CD4-positive, alpha-beta T cell (primary cell): ENCODE measurements at regions of chr9 and their contacts with region 1.

Region 1: DNA sequence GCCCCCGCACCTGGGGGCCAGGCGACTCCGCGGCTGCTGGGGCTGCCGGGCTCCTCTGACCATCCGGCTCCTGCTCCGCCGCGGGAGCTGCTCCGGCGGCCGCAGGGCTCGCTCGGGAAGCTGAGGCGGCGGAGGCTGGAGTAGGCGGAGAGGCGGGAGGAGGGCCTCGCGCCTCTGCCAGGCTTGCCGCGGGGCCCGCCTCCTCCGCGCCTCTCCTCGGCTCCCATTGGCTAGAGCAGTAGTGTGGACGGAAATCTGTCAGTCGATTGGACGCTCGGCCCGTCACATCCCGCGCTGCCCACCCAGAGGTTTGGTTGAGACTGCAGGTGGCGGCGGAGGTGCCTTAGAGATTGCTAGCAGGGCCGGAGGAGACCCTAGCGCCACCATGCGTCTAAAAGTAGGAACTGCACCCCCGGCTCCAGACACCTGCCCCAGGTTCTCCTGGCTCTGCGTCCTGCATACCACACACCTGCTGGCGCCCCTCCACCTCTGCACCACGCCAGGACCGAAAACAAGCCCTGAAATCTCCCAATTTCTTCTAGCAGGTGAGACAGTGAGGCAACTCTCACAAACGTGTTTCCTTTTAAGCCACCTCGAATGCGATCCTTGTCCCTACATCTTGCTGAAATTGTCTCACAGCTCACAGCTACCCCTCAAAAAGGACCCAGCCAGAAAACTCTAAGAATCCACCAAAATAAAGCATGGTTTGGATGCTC is at the start of gene SCAI:
- DNase-seq: peak; percentile 96 to 99 (median 98)
- ATAC-seq: peak; percentile 98
- H3K4me3 ChIP-seq: peak within 1 kb of the TSS; percentile 54
- H3K4me3 Mint-ChIP-seq: peak within 1 kb of the TSS; percentile 94
- H3K27ac ChIP-seq: no peak within 1 kb of the TSS
- H3K27ac Mint-ChIP-seq: peak within 1 kb of the TSS; percentile 75
- H3K4me1 ChIP-seq: peaks cover 21% of the 10 kb centered on the region
- H3K4me1 Mint-ChIP-seq: peaks cover 38% of the 10 kb centered on the region
- H3K27me3 ChIP-seq: no peaks in the 10 kb centered on the region
- H3K27me3 Mint-ChIP-seq: no peaks in the 10 kb centered on the region
- CTCF ChIP-seq: peak; percentile 97
- total RNA-seq, gene SCAI: 11.6 to 13.4 TPM

Region 2: GRCh38 chr9:124602204-124602603 is 541.3 kb before region 1 on chr9:
- CTCF ChIA-PET with region 1: no interaction called
- POLR2A ChIA-PET with region 1: no interaction called
- intact Hi-C with region 1: no loop called
- DNase-seq: no peak
- ATAC-seq: no peak
- H3K4me3 ChIP-seq: no peak overlapping the region
- H3K4me3 Mint-ChIP-seq: no peak overlapping the region
- H3K27ac ChIP-seq: no peak overlapping the region
- H3K27ac Mint-ChIP-seq: no peak overlapping the region
- H3K4me1 ChIP-seq: no peaks in the 10 kb centered on the region
- H3K4me1 Mint-ChIP-seq: no peaks in the 10 kb centered on the region
- H3K27me3 ChIP-seq: peaks cover 0 to 2% of the 10 kb centered on the region in 2 experiments
- H3K27me3 Mint-ChIP-seq: peaks cover 7% of the 10 kb centered on the region
- CTCF ChIP-seq: no peak

Region 3: DNA sequence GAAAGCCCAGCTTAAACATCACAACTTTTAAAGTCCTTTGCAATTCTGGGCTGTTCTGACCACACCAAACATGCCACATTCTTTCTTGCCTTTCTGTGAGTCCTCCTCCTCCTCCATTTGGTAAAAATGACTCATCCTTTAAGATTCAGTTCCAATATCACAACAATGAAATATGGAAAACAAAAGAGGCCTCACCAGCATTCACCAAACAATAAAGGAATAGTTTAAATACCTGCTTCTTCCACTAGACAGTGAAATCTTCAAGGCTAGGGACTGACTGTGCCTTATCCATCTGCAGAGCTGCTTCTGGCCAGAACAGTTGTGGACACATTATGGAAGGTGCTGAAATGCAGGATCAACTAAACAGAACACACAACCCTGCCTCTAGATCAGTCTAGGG is 408.4 kb before region 1 on chr9:
- CTCF ChIA-PET with region 1: no interaction called
- POLR2A ChIA-PET with region 1: no interaction called
- intact Hi-C with region 1: no loop called
- DNase-seq: no peak
- ATAC-seq: no peak
- H3K4me3 ChIP-seq: no peak overlapping the region
- H3K4me3 Mint-ChIP-seq: no peak overlapping the region
- H3K27ac ChIP-seq: no peak overlapping the region
- H3K27ac Mint-ChIP-seq: no peak overlapping the region
- H3K4me1 ChIP-seq: no peaks in the 10 kb centered on the region
- H3K4me1 Mint-ChIP-seq: no peaks in the 10 kb centered on the region
- H3K27me3 ChIP-seq: peaks cover 0 to 2% of the 10 kb centered on the region in 2 experiments
- H3K27me3 Mint-ChIP-seq: peaks cover 9% of the 10 kb centered on the region
- CTCF ChIP-seq: no peak

Region 4: GRCh38 chr9:124861342-124862229 is 281.9 kb before region 1 on chr9 and contains the starts of genes ARPC5L and RPL35:
- CTCF ChIA-PET with region 1: no interaction called
- POLR2A ChIA-PET with region 1: interaction called, 6 read pairs
- intact Hi-C with region 1: loop called in 1 of 2 experiments (anchors 5 kb)
- DNase-seq: peak; percentile 91 to 98 (median 95)
- ATAC-seq: peak; percentile 92
- H3K4me3 ChIP-seq: peak within 1 kb of the TSS; percentile 89
- H3K4me3 Mint-ChIP-seq: peak within 1 kb of the TSS; percentile 96
- H3K27ac ChIP-seq: peak within 1 kb of the TSS; percentile 89 to 92
- H3K27ac Mint-ChIP-seq: peak within 1 kb of the TSS; percentile 92
- H3K4me1 ChIP-seq: peaks cover 46% of the 10 kb centered on the region
- H3K4me1 Mint-ChIP-seq: peaks cover 38% of the 10 kb centered on the region
- H3K27me3 ChIP-seq: no peaks in the 10 kb centered on the region
- H3K27me3 Mint-ChIP-seq: no peaks in the 10 kb centered on the region
- CTCF ChIP-seq: peak; percentile 23
- total RNA-seq, gene ARPC5L: 36.8 to 37.0 TPM
- total RNA-seq, gene RPL35: 2,088 to 2,142 TPM

Region 5: GRCh38 chr9:124960409-124960752 is 183.2 kb before region 1 on chr9:
- CTCF ChIA-PET with region 1: no interaction called
- POLR2A ChIA-PET with region 1: interaction called, 5 read pairs
- intact Hi-C with region 1: loop called in 1 of 2 experiments (anchors 1 kb)
- DNase-seq: no peak
- ATAC-seq: no peak
- H3K4me3 ChIP-seq: no peak overlapping the region
- H3K4me3 Mint-ChIP-seq: no peak overlapping the region
- H3K27ac ChIP-seq: no peak overlapping the region
- H3K27ac Mint-ChIP-seq: no peak overlapping the region
- H3K4me1 ChIP-seq: peaks cover 19% of the 10 kb centered on the region
- H3K4me1 Mint-ChIP-seq: peaks cover 19% of the 10 kb centered on the region
- H3K27me3 ChIP-seq: no peaks in the 10 kb centered on the region
- H3K27me3 Mint-ChIP-seq: no peaks in the 10 kb centered on the region
- CTCF ChIP-seq: no peak

Region 6: GRCh38 chr9:125119643-125120286 is 23.8 kb before region 1 on chr9:
- CTCF ChIA-PET with region 1: no interaction called
- POLR2A ChIA-PET with region 1: no interaction called
- intact Hi-C with region 1: loop called (anchors 1 kb)
- DNase-seq: peak in 5 of 14 experiments; percentile 10 to 62 (median 30)
- ATAC-seq: peak; percentile 95
- H3K4me3 ChIP-seq: no peak overlapping the region
- H3K4me3 Mint-ChIP-seq: peak overlapping the region; percentile 66
- H3K27ac ChIP-seq: no peak overlapping the region
- H3K27ac Mint-ChIP-seq: peak overlapping the region; percentile 52
- H3K4me1 ChIP-seq: peaks cover 14% of the 10 kb centered on the region
- H3K4me1 Mint-ChIP-seq: peaks cover 41% of the 10 kb centered on the region
- H3K27me3 ChIP-seq: no peaks in the 10 kb centered on the region
- H3K27me3 Mint-ChIP-seq: no peaks in the 10 kb centered on the region
- CTCF ChIP-seq: peak; percentile 36

Region 7: GRCh38 chr9:125153712-125154367 is 10.3 kb after region 1 on chr9:
- CTCF ChIA-PET with region 1: interaction called, 11 read pairs
- POLR2A ChIA-PET with region 1: interaction called, 4 read pairs
- intact Hi-C with region 1: no loop called
- DNase-seq: no peak
- ATAC-seq: no peak
- H3K4me3 ChIP-seq: no peak overlapping the region
- H3K4me3 Mint-ChIP-seq: no peak overlapping the region
- H3K27ac ChIP-seq: no peak overlapping the region
- H3K27ac Mint-ChIP-seq: no peak overlapping the region
- H3K4me1 ChIP-seq: no peaks in the 10 kb centered on the region
- H3K4me1 Mint-ChIP-seq: peaks cover 10% of the 10 kb centered on the region
- H3K27me3 ChIP-seq: no peaks in the 10 kb centered on the region
- H3K27me3 Mint-ChIP-seq: no peaks in the 10 kb centered on the region
- CTCF ChIP-seq: no peak

Region 8: GRCh38 chr9:125176636-125177035 is 33.1 kb after region 1 on chr9:
- CTCF ChIA-PET with region 1: no interaction called
- POLR2A ChIA-PET with region 1: no interaction called
- intact Hi-C with region 1: no loop called
- DNase-seq: no peak
- ATAC-seq: no peak
- H3K4me3 ChIP-seq: no peak overlapping the region
- H3K4me3 Mint-ChIP-seq: no peak overlapping the region
- H3K27ac ChIP-seq: no peak overlapping the region
- H3K27ac Mint-ChIP-seq: peak overlapping the region; percentile 38
- H3K4me1 ChIP-seq: peaks cover 37% of the 10 kb centered on the region
- H3K4me1 Mint-ChIP-seq: peaks cover 79% of the 10 kb centered on the region
- H3K27me3 ChIP-seq: no peaks in the 10 kb centered on the region
- H3K27me3 Mint-ChIP-seq: no peaks in the 10 kb centered on the region
- CTCF ChIP-seq: no peak